T-cell (primary cell): ENCODE measurements at regions of chr5 and their contacts with region 1.

Region 1: DNA sequence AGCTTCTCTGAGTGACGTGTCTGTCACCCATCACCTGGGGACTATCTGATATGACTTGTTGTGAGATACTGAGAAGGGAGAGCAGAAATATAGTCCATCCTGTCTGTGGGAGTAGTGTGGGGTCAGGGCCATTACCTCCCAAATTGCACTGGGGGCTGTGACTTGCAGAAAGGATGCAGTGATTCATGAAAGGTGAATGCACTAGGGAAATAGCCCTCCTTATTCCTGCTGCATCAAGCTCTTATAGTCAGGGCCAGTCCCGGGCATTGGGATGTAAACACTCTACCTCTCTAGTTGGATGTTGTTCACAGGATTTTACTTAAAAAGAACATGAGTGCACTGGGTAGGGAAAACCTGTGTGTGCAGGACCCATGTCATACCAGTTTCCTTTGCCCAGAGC is 124.8 kb downstream of the STK32A start:
- DNase-seq: no peak
- ATAC-seq: no peak
- H3K4me3 ChIP-seq: no peak overlapping the region
- H3K4me3 Mint-ChIP-seq: no peak overlapping the region
- H3K27ac ChIP-seq: no peak overlapping the region
- H3K27ac Mint-ChIP-seq: no peak overlapping the region
- H3K4me1 ChIP-seq: no peaks in the 10 kb centered on the region
- H3K4me1 Mint-ChIP-seq: no peaks in the 10 kb centered on the region
- H3K27me3 ChIP-seq: no peaks in the 10 kb centered on the region
- H3K27me3 Mint-ChIP-seq: no peaks in the 10 kb centered on the region

Region 2: DNA sequence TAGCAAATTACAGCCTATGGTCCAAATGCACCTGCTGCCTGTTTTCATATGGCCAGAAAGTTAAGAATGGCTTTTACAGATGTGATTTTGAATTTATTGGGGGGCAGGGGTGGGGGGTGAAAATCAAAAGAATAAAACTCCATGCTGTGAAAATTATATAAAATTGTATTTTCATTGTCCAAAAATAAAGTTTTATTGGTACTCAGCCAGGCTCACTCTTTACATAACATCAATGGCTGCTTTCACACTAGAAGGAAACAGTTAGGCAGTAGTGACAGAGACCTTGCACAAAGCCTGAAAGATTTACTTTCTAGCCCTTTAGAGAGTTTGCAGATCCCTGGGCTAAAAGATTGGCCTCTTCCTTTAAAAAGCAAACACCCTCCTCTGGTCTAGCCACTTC is 1328.9 kb before region 1 on chr5:
- CTCF ChIA-PET with region 1: no interaction called
- POLR2A ChIA-PET with region 1: interaction called in 1 of 2 experiments, 10 read pairs
- DNase-seq: no peak
- ATAC-seq: no peak
- H3K4me3 ChIP-seq: no peak overlapping the region
- H3K4me3 Mint-ChIP-seq: no peak overlapping the region
- H3K27ac ChIP-seq: no peak overlapping the region
- H3K27ac Mint-ChIP-seq: no peak overlapping the region
- H3K4me1 ChIP-seq: no peaks in the 10 kb centered on the region
- H3K4me1 Mint-ChIP-seq: no peaks in the 10 kb centered on the region
- H3K27me3 ChIP-seq: no peaks in the 10 kb centered on the region
- H3K27me3 Mint-ChIP-seq: peaks cover 4 to 6% of the 10 kb centered on the region in 2 donors

Region 3: DNA sequence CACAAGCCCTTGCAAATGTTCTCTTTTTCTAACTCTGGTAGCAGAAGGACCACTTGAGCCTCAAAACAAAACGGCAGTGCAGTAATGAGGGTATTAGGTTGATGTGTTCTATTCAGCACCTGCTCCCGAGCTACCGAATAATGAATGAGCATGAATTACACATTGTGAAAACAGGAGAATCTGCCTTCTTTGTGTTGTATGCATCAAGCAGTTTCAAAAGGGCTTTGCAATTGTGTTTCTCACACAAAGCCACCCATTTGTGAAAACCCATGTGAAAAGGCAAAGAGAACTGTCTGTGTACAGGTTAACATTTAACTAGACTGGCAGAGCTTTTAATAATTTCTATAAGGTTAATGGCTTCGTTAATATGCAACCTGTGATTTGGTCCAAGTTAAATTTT is 26.9 kb before region 1 on chr5:
- CTCF ChIA-PET with region 1: no interaction called
- POLR2A ChIA-PET with region 1: no interaction called
- DNase-seq: no peak
- ATAC-seq: no peak
- H3K4me3 ChIP-seq: no peak overlapping the region
- H3K4me3 Mint-ChIP-seq: no peak overlapping the region
- H3K27ac ChIP-seq: no peak overlapping the region
- H3K27ac Mint-ChIP-seq: no peak overlapping the region
- H3K4me1 ChIP-seq: no peaks in the 10 kb centered on the region
- H3K4me1 Mint-ChIP-seq: no peaks in the 10 kb centered on the region
- H3K27me3 ChIP-seq: no peaks in the 10 kb centered on the region
- H3K27me3 Mint-ChIP-seq: peaks cover 0 to 3% of the 10 kb centered on the region in 2 donors

Region 4: GRCh38 chr5:147997486-147997885 is 637.9 kb after region 1 on chr5:
- CTCF ChIA-PET with region 1: no interaction called
- POLR2A ChIA-PET with region 1: no interaction called
- DNase-seq: no peak
- ATAC-seq: no peak
- H3K4me3 ChIP-seq: no peak overlapping the region
- H3K4me3 Mint-ChIP-seq: no peak overlapping the region
- H3K27ac ChIP-seq: no peak overlapping the region
- H3K27ac Mint-ChIP-seq: no peak overlapping the region
- H3K4me1 ChIP-seq: no peaks in the 10 kb centered on the region
- H3K4me1 Mint-ChIP-seq: no peaks in the 10 kb centered on the region
- H3K27me3 ChIP-seq: peaks cover 0 to 3% of the 10 kb centered on the region in 2 experiments
- H3K27me3 Mint-ChIP-seq: peaks cover 0 to 4% of the 10 kb centered on the region in 2 donors